Sciatic nerve (tissue), 2 donors: ENCODE measurements at regions of chr12 and their contacts with region 1.

Region 1: DNA sequence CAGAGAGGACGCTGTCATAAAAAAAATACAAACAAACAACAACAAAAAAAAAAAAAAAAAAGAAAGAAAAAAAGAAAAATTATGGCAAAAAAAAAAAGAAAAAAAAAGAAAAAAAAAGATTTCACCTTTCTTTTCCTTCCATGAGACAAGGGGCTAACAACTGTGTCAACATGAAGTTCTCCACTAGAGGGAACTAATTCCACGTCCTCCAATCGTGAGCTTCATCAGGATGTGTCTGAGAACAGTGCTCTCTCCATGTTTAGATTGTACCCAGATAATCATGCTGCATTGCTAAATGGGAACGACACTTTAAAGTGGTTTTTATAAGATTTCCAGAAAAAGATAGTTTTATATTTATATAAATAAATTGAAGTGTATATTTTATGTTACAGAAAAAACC is 96.2 kb upstream of the PTPRB start:
- DNase-seq: no peak
- ATAC-seq: peak; percentile 89

Region 2: DNA sequence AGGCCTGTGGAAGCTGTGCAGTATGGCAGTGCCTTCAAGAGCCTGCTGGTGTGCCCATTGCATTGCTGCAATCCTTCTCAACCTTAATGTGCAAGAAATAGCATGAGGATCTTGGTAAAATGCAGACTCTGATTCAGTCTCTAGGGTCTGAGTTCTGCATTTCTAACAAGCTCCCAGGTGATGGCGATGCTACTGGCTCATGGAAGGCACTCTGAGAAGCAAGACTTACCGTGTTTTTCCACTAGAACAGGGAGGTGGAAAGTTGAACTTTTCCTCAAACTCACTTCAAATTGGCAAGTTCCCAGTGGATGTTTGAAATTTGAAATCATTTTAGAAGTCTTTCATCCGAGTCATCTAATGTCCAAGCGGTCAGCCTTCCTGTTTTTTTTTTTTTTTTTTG is 852.8 kb before region 1 on chr12:
- intact Hi-C with region 1: loop called (anchors 10 kb)
- DNase-seq: no peak
- ATAC-seq: no peak

Region 3: DNA sequence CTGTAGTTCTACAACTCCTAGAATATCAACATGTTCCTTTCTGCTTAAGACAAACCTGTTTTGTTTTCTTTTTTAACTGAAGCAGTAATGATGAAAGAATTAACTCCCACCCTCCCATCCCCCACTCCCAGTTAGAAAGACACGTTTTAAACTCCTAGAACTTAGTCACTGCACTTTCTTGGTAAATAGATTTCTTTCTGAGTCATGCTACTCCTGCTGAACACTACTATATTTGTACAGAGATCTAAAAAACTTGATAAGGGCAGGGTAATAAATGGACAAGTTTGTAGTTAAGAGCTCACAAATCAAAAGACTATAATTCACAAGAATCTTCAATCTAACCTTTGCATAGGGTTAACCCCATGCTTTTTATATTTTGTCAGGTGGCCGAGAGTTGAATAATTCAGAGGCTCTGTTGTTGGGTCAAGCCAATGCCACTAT is 22.8 kb after region 1 on chr12:
- intact Hi-C with region 1: no loop called
- DNase-seq: no peak
- ATAC-seq: no peak